PC-9 (cell line): ENCODE measurements at regions of chr4 and their contacts with region 1.

Region 1: GRCh38 chr4:99949034-99949998 is 759 bp downstream of the H2AZ1 start:
- DNase-seq: peak; percentile 83 to 89
- H3K4me3 ChIP-seq: peak overlapping the region; percentile 90
- H3K27ac ChIP-seq: peak overlapping the region; percentile 80
- H3K4me1 ChIP-seq: peaks cover 35% of the 10 kb centered on the region
- H3K27me3 ChIP-seq: no peaks in the 10 kb centered on the region
- CTCF ChIP-seq: peak; percentile 82

Region 2: GRCh38 chr4:98143001-98143899 is 1806.1 kb before region 1 on chr4 and contains the start of gene STPG2:
- CTCF ChIA-PET with region 1: no interaction called
- POLR2A ChIA-PET with region 1: no interaction called
- intact Hi-C with region 1: loop called (anchors 5 kb)
- DNase-seq: peak; percentile 83 to 90
- H3K4me3 ChIP-seq: peak within 1 kb of the TSS; percentile 63
- H3K27ac ChIP-seq: peak within 1 kb of the TSS; percentile 89
- H3K4me1 ChIP-seq: peaks cover 21% of the 10 kb centered on the region
- H3K27me3 ChIP-seq: no peaks in the 10 kb centered on the region
- CTCF ChIP-seq: peak; percentile 79
- total RNA-seq, gene STPG2: 0.35 TPM in 1 of 2 replicates, not detected in the other

Region 3: DNA sequence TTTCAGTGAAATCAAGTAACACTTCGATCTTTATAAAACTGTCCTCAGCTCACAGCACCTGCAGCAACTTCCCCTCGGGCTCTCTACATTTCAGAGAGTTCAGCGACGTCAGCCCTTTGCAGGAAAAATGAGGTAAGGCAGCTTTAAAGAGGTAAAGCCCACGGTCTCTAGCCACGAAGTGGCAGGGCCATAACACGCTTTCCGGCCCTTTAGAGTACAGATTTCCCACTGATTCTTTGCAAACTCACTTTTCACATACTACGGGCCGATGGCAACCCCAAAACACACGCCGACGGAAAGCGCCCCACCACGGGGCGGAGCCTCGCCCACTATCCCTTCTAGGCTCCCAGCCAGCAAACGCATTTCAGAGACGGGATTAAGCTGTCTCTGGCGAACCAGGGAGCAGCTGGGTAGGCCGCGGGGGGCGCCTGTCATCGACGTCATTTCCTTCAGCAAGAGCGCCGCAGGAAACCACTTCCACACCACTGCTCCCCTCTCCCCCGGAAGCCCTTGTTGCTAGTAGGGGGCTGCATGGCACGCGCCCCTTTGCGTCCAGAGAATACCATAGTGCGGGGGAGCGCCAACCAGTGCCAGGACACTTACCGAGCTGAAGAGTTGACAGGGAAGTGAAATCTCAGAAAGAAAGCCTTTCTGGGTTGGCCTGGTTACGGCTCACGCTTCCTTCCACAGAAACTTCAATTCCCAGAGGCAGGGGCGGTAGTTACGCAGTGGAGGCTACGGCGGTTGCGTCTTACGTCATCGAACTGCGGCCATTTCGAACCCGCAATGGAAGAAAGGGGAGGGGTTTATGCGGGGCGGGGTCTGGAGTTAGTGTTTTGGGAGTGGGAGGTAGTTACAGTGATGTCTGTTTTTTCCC is 385.8 kb before region 1 on chr4 and contains the start of gene TRMT10A:
- CTCF ChIA-PET with region 1: no interaction called
- POLR2A ChIA-PET with region 1: interaction called, 9 read pairs
- intact Hi-C with region 1: loop called (anchors 1 kb)
- DNase-seq: peak; percentile 87 to 93
- H3K4me3 ChIP-seq: peak within 1 kb of the TSS; percentile 69
- H3K27ac ChIP-seq: peak within 1 kb of the TSS; percentile 92
- H3K4me1 ChIP-seq: 0 out of 2 replicates have a peak, but pooled peaks cover 9% of the 10 kb centered on the region
- H3K27me3 ChIP-seq: no peaks in the 10 kb centered on the region
- CTCF ChIP-seq: no peak
- total RNA-seq, gene TRMT10A: 4.6 and 6.1 TPM in 2 replicates

Region 4: DNA sequence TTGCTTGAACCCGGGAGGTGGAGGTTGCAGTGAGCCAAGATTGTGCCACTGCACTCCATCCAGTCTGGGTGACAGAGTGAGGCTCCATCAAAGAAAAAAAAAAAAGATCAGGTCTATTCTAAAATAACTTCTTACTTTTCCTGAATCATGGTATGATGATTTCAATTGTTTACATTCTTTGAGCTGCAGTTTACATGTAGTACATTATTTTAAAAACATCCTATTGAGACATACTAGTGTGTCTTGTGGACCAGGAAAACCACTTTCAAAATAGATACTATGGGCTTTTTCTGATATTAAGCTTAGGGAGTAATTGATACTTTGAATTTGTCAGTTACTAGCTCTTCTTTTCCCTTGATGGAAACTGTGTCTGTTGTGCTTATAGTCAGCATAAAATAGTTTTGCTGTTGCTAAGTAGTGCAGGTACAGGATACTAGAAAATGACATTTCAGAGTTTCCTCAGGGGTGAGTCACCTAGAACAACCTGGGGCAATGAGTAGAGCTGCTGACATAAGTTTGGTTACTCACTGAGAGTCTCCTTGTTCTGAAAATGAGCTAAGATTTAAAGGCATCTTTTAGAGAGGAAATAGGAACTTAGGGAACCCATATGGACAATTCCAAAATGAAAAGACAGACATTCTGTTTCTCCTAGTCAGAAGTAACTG is 238.5 kb before region 1 on chr4:
- CTCF ChIA-PET with region 1: no interaction called
- POLR2A ChIA-PET with region 1: interaction called, 10 read pairs
- intact Hi-C with region 1: no loop called
- DNase-seq: peak; percentile 9 to 87
- H3K4me3 ChIP-seq: no peak overlapping the region
- H3K27ac ChIP-seq: peak overlapping the region; percentile 65
- H3K4me1 ChIP-seq: peaks cover 24% of the 10 kb centered on the region
- H3K27me3 ChIP-seq: no peaks in the 10 kb centered on the region
- CTCF ChIP-seq: no peak

Region 5: DNA sequence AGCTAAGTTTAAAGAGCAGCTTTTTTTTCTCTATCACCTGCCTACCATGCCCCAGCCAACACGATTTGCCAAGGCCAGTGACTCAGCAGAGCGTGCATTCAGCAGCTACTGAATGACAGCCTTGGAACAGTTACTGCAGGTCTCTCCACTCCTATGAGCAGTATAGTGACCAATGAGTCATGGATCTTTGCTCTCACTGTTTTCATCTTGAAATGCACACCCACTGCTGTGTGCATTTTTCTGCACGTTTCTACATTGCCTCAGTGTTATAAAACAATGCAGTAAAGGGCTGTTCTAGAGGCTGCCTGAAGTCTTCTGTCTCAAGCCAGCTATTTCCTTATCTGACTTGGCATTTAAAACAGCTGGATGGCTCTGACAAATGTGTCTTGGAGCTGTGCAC is 225.7 kb before region 1 on chr4:
- CTCF ChIA-PET with region 1: no interaction called
- POLR2A ChIA-PET with region 1: no interaction called
- intact Hi-C with region 1: loop called (anchors 5 kb)
- DNase-seq: peak; percentile 64 to 88
- H3K4me3 ChIP-seq: no peak overlapping the region
- H3K27ac ChIP-seq: peak overlapping the region; percentile 74
- H3K4me1 ChIP-seq: peaks cover 38% of the 10 kb centered on the region
- H3K27me3 ChIP-seq: no peaks in the 10 kb centered on the region
- CTCF ChIP-seq: no peak

Region 6: DNA sequence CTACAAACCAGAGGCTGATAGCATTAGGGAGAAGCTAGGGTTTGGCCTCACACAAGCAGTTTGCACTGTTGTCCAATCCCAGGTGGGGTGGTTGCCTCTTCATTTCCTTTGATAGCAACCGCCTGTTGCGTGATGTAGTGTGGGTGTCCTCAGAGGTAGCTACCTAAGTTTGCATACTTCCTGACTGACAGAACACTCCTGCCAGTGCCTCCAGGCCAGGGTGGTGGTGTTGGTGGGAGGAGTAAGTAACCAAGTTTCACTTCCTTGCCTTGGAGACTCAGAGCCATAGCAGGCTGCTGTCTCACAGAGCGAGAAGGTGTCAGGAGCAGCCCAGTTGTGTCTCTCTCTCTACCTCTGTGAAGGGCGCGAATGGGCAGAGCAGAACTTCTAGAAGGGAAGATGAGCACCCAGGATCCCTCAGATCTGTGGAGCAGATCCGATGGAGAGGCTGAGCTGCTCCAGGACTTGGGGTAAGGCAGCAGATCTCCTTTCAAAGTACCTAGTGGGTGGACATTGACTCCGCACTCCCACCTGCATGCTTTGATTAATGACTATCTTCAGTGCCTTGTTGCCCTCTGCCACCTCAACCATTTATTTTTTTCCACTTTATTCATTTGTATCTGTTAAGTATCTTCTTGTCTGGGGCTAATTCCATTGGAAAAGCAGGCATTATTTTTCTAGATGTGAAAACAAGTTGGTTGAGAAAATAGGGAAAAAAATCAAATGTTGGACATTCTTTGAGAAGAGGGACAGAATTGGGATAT is 132.6 kb before region 1 on chr4 and contains the start of gene DAPP1:
- CTCF ChIA-PET with region 1: interaction called, 4 read pairs
- POLR2A ChIA-PET with region 1: no interaction called
- intact Hi-C with region 1: loop called (anchors 1 kb)
- DNase-seq: peak; percentile 77 to 99
- H3K4me3 ChIP-seq: peak within 1 kb of the TSS; percentile 65
- H3K27ac ChIP-seq: peak within 1 kb of the TSS; percentile 100
- H3K4me1 ChIP-seq: peaks cover 39% of the 10 kb centered on the region
- H3K27me3 ChIP-seq: no peaks in the 10 kb centered on the region
- CTCF ChIP-seq: no peak
- total RNA-seq, gene DAPP1: 7.9 and 9.6 TPM in 2 replicates

Region 7: GRCh38 chr4:99894161-99894997 is 54.9 kb before region 1 on chr4 and contains the start of gene LAMTOR3:
- CTCF ChIA-PET with region 1: no interaction called
- POLR2A ChIA-PET with region 1: interaction called, 6 read pairs
- intact Hi-C with region 1: loop called (anchors 5 kb)
- DNase-seq: peak; percentile 77 to 87
- H3K4me3 ChIP-seq: peak within 1 kb of the TSS; percentile 86
- H3K27ac ChIP-seq: peak within 1 kb of the TSS; percentile 72
- H3K4me1 ChIP-seq: 0 out of 2 replicates have a peak, but pooled peaks cover 17% of the 10 kb centered on the region
- H3K27me3 ChIP-seq: no peaks in the 10 kb centered on the region
- CTCF ChIP-seq: no peak
- total RNA-seq, gene LAMTOR3: 12.0 and 17.4 TPM in 2 replicates

Region 8: GRCh38 chr4:100042227-100042626 is 92.9 kb after region 1 on chr4:
- CTCF ChIA-PET with region 1: no interaction called
- POLR2A ChIA-PET with region 1: no interaction called
- intact Hi-C with region 1: no loop called
- DNase-seq: no peak
- H3K4me3 ChIP-seq: no peak overlapping the region
- H3K27ac ChIP-seq: no peak overlapping the region
- H3K4me1 ChIP-seq: no peaks in the 10 kb centered on the region
- H3K27me3 ChIP-seq: no peaks in the 10 kb centered on the region
- CTCF ChIP-seq: no peak